Posterior vena cava (tissue), 2 donors: ENCODE measurements at regions of chr1 and their contacts with region 1.

Region 1: DNA sequence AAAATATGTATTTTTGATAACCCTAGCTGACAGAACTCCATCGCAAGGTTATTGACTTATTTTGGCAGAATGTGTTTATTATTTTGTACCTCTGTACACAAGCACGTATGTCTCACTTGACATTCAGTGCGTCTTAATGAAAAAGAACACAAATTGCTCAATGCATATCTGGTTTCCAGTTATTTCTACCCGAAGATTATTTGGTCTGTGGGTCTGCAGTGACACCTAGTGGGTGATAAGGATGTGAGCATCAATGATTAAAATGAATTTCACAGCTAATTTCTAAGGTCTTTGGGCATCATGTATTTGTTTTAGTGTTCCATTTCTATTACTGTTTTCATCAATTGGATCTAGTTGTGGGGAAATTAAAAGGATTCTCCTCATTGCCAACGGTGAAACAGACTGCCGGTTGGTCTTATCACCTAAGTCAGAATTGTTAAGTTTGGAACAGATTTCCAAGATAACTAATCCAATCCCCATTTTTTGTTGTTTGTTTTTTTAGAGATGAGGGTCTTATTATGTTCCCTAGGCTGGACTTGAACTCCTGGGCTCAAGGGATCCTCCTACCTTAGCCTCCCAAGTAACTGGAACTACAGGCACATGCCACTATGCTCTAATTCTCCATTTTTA is 13.9 kb downstream of the DDX20 start:
- DNase-seq: no peak

Region 2: DNA sequence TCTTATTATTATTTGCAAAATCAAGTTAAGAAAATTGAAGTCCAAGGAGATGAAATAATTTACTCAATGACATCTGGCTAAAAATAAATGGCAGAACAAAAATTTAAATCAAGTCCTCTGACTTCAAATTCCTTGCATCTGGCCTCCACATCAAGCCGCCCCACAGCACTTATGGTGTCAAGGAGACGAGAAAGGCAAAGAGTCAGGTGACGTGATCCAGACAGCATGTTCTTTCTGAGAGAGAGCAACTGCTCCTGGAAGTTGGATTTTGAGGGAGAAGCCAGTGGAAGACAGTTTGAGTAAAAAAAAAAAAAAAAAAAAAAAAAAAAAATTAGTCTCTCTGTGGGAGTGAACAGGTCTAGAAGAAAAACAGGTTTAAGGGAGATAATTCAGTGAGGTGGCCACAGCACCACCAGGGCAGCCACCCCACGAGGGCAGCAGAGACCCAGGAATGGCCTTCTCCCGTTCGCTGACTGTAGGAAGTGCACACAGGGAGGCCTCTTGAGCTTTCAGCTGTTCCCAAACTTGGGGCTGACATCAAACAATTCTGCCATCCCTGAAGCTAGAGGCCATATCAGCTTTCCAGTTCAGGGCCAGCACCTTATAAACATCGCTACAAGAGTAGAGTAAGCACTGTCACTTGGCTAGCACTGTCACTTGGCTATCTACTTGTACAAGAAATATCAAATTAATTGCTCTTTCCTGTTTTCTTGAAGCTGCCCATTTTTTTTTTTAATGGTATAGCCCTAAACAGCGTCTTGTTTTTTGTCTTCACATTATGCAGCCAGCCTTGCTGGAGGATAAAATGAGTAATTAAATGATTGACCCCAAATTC is 288.0 kb before region 1 on chr1:
- intact Hi-C with region 1: loop called in 1 of 2 experiments (anchors 5 kb)
- DNase-seq: peak; percentile 93